ENCODE measurements at regions of chr20 and their contacts with region 1.

Region 1: GRCh38 chr20:40689943-40690835 is 1.2 kb upstream of the MAFB start:
- H3K4me3 Mint-ChIP-seq: peak overlapping the region; percentile 100
- H3K27ac Mint-ChIP-seq: peak overlapping the region; percentile 97
- H3K4me1 Mint-ChIP-seq: peaks cover 48% of the 10 kb centered on the region
- H3K27me3 Mint-ChIP-seq: peaks cover 52% of the 10 kb centered on the region

Region 2: GRCh38 chr20:39885975-39886649 is 804.1 kb before region 1 on chr20:
- intact Hi-C with region 1: loop called (anchors 2 kb)
- H3K4me3 Mint-ChIP-seq: peak overlapping the region; percentile 44
- H3K27ac Mint-ChIP-seq: peak overlapping the region; percentile 81
- H3K4me1 Mint-ChIP-seq: peaks cover 27% of the 10 kb centered on the region
- H3K27me3 Mint-ChIP-seq: peaks cover 9% of the 10 kb centered on the region

Region 3: GRCh38 chr20:40160097-40160550 is 530.1 kb before region 1 on chr20:
- intact Hi-C with region 1: loop called (anchors 5 kb)
- H3K4me3 Mint-ChIP-seq: no peak overlapping the region
- H3K27ac Mint-ChIP-seq: no peak overlapping the region
- H3K4me1 Mint-ChIP-seq: peaks cover 32% of the 10 kb centered on the region
- H3K27me3 Mint-ChIP-seq: peaks cover 14% of the 10 kb centered on the region

Region 4: DNA sequence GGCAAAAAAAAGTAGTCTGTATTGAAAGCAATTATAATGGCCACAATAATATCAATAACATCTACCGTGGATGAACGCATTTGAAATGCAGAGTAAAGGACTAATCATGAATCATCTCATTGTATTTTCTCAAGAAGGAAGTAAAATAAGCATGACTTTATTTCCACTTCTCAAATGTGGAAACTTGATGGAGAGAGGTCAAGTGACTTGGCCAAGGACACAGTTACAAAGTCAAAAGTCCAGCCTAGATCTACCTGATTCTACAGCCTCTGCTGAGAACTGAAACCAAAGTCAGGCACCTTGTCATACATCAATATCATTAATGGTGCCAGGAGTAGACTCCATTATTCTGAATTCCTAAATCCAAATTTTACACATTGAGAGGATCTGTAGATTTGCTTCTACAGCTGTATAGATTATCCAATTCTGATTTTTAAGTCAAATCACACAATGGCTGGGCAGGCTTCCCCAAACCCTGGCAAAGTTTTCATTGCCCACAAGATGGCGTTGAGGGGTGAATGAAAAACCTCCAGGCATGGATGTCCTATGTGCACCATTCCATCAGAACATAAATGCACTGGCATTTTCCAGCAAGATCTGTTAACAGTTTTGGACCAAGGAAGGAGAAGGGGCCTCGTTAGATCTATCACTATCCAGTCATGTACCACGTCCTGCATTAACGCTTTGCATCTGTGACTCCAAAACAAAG is 424.2 kb before region 1 on chr20:
- intact Hi-C with region 1: loop called (anchors 10 kb)
- H3K4me3 Mint-ChIP-seq: no peak overlapping the region
- H3K27ac Mint-ChIP-seq: peak overlapping the region; percentile 39
- H3K4me1 Mint-ChIP-seq: peaks cover 73% of the 10 kb centered on the region
- H3K27me3 Mint-ChIP-seq: peaks cover 8% of the 10 kb centered on the region

Region 5: GRCh38 chr20:40359131-40359903 is 330.9 kb before region 1 on chr20:
- intact Hi-C with region 1: loop called (anchors 10 kb)
- H3K4me3 Mint-ChIP-seq: peak overlapping the region; percentile 35
- H3K27ac Mint-ChIP-seq: peak overlapping the region; percentile 83
- H3K4me1 Mint-ChIP-seq: peaks cover 89% of the 10 kb centered on the region
- H3K27me3 Mint-ChIP-seq: peaks cover 6% of the 10 kb centered on the region